Cardiac septum (tissue), 1 donor: ENCODE measurements at regions of chr19 and their contacts with region 1.

Region 1: GRCh38 chr19:8005534-8006256 is at the start of gene ELAVL1:
- DNase-seq: peak; percentile 91
- total RNA-seq, gene ELAVL1: 55.2 TPM

Region 2: GRCh38 chr19:7575434-7576040 is 430.2 kb before region 1 on chr19:
- intact Hi-C with region 1: no loop called
- DNase-seq: no peak

Region 3: GRCh38 chr19:7943444-7944176 is 62.1 kb before region 1 on chr19 and contains the start of gene TIMM44:
- intact Hi-C with region 1: loop called (anchors 1 kb)
- DNase-seq: peak; percentile 100
- total RNA-seq, gene TIMM44: 82.6 TPM